ENCODE measurements at regions of chr12 and their contacts with region 1.

Region 1: DNA sequence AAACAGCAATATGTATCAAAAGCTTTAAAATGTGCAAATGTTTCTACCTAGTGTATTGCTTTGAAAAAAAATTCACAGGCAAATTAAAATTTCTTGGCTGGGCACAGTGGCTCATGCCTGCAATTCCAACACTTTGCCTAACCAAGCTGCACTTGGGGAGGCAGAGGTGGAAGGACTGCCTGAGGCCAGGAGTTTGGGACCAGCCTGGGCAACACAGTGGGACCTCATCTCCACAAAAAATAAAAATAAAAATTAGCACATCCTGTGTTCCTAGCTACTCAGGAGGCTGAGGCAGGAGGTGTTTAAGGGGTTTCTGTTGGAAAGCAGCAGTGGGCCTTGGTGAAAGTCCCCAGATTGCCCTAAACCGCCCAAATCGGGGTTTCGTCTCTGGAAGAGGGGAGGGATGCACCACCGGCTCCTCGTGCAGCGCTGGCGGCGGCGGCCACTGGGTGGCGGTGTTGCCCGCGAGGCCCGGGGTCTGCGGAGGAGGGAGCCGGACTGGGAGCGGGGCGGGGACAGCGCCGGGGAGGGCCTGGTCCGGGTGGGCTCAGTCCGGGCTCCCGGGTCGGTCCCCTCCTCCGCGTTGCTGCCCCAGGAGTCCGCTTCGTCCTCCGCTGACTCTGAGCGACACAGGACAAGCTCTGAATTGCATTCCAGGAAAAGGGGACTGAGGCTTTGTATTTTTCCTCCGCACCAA is 265.6 kb downstream of the AACS start:
- DNase-seq: peak; percentile 79

Region 2: GRCh38 chr12:125341422-125341821 is 10.6 kb after region 1 on chr12:
- intact Hi-C with region 1: no loop called
- DNase-seq: no peak

Region 3: DNA sequence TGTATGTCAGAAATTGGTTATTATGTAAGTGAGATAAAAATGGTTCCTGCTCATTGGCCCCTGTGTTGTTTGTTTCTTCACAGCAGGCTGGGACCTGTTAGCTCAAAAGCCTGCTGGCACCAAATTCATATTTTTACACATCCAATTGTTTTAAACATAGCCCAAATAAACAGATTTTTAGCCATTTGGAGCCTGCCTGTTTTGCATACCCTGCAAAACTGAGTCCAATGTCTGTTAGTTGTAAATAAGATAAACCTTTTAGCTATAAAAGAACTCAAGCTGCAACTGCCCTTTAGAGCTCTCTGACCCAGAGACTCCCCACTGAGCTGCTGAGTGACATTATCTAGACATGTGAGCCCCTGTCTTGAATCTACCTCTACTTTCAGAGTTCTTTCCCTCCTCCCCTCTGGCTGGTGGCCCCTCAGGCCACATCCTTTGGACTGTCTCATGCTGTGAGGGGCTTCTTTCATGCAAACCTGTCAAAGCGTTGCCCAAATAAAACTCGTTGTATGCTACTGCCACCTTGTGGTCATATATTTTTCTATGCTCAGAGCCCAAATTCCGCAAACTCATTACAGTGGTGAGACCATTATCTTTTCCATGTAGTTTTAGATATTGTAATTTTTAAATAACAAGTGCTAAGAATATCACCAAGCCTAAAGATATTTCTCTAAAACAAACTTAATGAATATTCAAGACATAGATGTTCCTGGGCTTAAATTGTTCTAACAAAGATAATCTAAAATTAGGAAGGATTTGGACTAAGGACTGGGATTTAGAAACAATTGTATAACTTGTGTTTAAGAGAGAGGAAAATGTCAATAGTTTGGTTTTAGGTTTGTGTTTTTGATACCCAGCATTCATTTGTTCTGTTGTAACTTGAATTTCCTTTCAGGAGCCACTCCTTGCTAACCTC is 72.3 kb after region 1 on chr12:
- intact Hi-C with region 1: loop called (anchors 5 kb)
- DNase-seq: no peak

Region 4: DNA sequence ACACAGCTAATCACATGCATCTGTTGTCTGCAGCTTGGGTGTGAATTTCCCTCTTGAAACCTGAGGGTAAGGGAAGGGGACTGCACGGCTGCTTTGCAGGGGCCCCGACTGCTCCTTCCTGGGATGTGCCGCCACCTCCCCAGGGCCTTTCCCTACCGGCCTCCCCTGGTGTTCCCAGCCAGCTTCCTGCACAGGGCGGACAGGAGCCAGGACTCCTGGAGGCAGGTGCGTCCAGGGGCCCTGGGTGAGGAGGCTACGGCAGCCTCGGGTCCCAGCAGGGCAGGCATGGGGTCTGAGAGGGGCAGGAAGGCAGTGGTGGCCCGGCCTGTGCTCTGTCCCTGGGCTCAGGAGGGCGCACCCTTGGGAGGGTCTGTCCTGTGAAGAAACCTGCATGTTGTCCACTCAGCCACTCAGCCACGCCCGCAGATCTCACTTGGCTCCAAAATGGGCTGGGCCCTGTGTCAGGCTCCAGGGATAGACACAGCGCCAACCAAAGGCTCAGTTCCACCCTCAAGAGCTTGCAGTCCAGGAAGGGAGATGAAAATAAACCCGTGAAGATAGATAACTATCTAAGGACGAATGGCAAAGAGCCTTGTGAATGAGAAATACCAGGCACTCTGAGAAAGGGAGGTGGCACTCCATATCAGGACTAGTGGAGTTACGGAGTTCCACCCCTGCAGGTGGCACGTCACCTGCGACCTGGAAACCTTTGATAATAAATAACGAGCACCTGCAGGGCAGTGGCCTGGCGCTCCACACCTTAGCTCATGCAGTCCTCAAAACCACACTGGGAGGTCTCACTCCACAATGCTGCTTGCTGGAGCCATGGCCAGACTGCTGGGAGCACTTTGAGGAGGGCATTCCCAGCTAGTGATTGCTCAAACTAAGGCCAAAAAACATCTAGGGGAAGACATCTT is 161.8 kb after region 1 on chr12:
- intact Hi-C with region 1: no loop called
- DNase-seq: no peak